AG04449 (cell line): ENCODE measurements at regions of chr2 and their contacts with region 1.

Region 1: DNA sequence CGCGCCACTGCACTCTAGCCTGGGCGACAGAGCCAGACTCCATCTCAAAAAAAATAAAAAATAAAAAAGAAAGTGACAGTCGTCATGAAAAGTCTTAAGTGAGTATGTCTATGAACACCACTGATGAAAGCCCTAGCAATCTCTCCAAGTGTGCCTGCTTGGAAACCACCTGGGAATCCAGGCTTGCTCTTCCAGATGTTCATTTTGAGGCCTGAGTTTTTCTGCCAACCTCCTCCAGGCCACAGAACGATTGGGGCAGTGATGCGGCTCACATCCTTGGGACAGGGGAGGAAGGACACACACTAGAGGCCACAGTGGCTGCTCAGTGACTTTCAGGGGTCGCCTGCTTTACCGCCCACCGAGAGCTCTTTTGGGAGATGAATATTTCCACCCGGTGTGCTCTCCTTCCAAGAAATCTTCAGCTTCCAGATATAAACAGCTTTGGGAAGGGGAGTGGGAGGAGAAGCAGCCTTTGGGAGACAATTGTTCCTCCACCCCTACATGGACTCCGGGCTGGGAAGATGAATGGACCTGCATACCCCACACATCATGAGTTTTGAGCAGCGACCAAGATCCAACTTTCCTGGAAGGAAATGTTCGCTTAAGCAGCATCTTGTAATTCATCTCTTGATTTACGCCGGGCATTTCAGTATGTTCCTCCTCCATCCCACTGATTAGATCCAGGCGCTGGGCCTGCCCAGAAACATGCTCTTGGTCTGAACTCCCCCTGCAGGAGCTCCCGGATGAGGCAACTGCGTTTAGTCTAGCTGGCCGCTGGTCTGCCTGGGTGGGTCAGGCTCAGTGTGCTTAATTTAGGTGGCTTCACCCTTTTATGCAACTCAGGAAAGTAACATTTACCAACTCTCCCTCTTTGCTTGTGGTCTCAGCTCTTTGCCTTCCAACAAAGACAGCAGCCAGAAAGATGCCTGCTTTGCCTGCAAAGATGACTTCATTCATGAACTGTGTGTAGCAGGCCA is 6.2 kb upstream of the ARMC9 start:
- DNase-seq: peak; percentile 60
- H3K4me3 ChIP-seq: no peak overlapping the region
- CTCF ChIP-seq: peak; percentile 89

Region 2: DNA sequence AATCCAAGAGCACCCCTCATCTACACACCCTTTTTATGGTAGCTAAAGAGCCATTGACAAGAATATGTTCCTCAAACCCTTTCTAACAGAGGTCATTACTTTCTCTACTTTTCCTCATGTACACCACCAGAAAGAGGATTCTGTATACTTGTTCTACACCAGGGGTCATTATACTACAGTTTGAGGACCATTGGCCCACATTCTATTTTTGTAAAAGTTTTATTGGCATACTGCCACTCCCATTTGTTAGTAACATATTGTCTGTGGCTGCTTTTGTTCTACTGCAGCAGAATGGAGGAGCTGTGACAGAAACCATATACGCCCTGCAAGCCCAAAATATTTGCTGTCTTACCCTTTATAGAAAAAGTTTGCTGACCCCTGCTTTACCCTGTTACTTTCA is 81.6 kb before region 1 on chr2:
- CTCF ChIA-PET with region 1: interaction called, 336 read pairs
- POLR2A ChIA-PET with region 1: no interaction called
- DNase-seq: no peak
- H3K4me3 ChIP-seq: no peak overlapping the region
- CTCF ChIP-seq: no peak

Region 3: DNA sequence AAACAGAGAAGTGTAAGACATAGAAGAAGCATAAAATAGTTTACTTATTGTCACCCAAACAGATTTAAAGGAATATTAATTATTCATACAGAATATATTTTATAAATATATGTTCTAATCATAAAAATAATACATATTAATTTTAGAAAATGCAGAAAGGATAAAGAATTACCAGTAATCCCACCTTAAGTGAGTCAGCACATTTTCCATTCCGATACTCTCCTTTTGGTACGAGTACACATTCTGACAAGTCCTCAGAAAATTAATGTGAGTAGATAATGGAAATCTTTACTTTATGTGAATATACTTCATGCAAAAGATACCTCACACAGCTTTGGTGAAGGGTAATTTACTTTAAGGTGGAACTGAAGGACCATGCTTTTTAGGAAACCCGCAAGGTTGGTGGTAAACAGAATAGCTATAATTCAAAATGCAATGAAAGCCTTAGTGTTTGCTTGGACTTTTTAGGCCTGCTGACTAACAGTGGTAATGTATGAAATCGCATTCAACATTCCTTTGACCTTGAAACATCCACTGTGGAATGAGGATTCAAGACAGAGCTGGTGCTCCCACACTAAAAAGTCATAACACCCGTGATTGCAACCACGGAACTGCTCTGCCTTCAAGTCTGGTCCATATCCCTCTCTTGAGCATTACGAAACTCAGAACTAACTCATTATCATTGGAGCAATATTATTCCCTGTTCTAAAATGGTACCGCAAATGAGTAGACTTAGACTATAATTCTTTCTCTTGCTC is 39.2 kb before region 1 on chr2:
- CTCF ChIA-PET with region 1: interaction called, 10 read pairs
- POLR2A ChIA-PET with region 1: interaction called, 4 read pairs
- DNase-seq: peak; percentile 82
- H3K4me3 ChIP-seq: no peak overlapping the region
- CTCF ChIP-seq: no peak

Region 4: GRCh38 chr2:231170055-231170454 is 22.1 kb before region 1 on chr2:
- CTCF ChIA-PET with region 1: interaction called, 13 read pairs
- POLR2A ChIA-PET with region 1: no interaction called
- DNase-seq: no peak
- H3K4me3 ChIP-seq: no peak overlapping the region
- CTCF ChIP-seq: no peak

Region 5: GRCh38 chr2:231181860-231182512 is 10.2 kb before region 1 on chr2:
- CTCF ChIA-PET with region 1: interaction called, 14 read pairs
- POLR2A ChIA-PET with region 1: no interaction called
- DNase-seq: no peak
- H3K4me3 ChIP-seq: no peak overlapping the region
- CTCF ChIP-seq: no peak